Astrocyte of the cerebellum (primary cell): ENCODE measurements at regions of chr2 and their contacts with region 1.

Region 1: DNA sequence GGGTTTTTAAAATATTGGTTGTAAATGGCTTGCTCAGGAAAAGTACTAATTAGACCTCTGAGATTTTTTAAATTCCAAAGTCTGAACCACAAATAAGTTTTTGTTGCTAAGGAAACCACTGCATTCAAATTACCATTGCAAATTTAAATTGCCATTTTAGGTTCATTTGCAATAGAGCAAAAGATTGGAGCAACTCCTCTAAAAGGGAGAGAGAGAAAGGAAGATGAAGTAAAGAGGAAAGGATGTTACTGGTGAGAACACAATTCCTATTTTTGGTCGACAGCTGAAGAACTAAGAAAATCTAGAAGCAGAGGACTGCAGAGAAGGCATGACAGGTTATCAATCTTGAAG is 74.9 kb downstream of the FOXI3 start:
- DNase-seq: no peak
- H3K4me3 ChIP-seq: no peak overlapping the region
- CTCF ChIP-seq: no peak

Region 2: DNA sequence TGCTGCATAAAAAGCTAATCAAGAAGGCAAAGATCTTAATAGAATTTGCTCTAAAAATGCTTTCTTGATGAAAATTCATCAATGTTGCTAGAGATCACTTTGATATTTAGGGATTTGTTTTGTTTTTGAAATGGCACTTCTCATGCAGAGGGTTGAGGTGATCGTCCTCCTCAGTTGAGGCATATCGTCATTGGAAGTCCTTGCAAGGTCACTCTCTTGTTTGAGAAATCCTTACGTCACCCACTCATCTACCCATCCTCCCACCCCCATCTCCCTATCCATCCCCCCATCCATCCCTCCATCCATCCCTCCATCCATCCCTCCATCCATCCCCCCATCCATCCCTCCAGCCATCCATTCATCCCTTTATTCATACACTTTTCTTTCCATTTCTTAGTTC is 73.8 kb before region 1 on chr2:
- in situ Hi-C with region 1: loop called (anchors 5 kb)
- DNase-seq: no peak
- H3K4me3 ChIP-seq: no peak overlapping the region
- CTCF ChIP-seq: no peak